ENCODE measurements at regions of chr15 and their contacts with region 1.

Region 1: GRCh38 chr15:84955089-84955848 is 26.4 kb upstream of the PDE8A start:
- DNase-seq: peak; percentile 81 to 88
- ATAC-seq: peak; percentile 90
- H3K4me3 ChIP-seq: no peak overlapping the region
- H3K27ac ChIP-seq: no peak overlapping the region
- H3K4me1 ChIP-seq: peaks cover 0 to 2% of the 10 kb centered on the region in 2 donors
- H3K27me3 ChIP-seq: peaks cover 0 to 2% of the 10 kb centered on the region in 2 donors

Region 2: GRCh38 chr15:84588053-84588874 is 367.0 kb before region 1 on chr15:
- intact Hi-C with region 1: loop called in 1 of 2 experiments (anchors 10 kb)
- DNase-seq: peak; percentile 90 to 95
- ATAC-seq: peak; percentile 99
- H3K4me3 ChIP-seq: peak overlapping the region in 1 of 2 donors; percentile 12
- H3K27ac ChIP-seq: no peak overlapping the region
- H3K4me1 ChIP-seq: no peaks in the 10 kb centered on the region
- H3K27me3 ChIP-seq: no peaks in the 10 kb centered on the region

Region 3: DNA sequence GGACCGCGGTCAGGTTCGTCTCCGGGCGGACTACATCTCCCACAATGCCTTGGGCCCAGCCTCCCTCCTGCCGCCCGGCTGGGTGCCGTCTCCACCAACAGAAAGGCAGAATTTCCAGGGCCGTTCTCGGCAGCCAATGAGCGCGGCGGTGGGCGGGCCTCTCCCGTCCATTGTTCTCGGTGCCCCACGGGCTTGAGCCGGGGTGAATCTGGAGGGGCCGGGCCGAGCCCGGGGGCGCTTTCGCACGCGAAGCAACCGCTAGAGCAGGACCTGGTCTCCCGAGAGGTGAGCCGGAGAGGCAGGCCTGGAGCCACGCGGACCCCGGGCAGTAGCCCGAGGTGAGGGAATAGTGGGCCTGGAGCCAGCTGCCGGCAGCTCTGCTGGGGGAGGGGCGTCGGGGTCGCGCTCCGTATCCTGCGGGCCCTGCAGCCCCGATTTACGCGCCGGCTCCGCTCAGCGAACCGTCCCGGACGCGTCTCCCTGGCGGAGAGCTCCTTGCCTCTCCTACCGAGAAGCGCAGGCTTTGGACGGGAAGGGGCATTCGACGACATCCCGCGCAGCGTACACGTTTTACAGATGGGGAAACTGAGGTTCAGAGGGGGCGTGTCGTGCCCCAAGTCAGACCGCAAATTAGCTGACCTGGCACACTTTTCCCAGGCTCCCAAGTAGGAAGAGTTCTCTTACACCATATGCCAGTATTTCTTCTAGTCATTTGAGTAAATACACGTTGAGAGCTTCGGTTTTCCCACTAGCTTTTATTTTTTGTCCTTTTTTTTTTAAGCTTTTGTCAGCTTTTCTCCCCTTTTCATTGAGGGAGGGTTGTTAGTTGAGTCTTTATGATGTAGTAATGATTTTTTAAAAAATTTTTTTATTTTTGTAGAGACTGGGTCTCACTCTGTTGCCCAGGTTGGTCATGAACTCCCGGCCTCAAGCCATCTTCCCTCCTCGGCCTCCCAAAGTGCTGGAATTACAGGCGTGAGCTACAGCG is 354.1 kb before region 1 on chr15 and contains the start of gene ZSCAN2:
- intact Hi-C with region 1: no loop called
- DNase-seq: peak; percentile 98
- ATAC-seq: peak; percentile 98
- H3K4me3 ChIP-seq: peak within 1 kb of the TSS; percentile 79 to 91
- H3K27ac ChIP-seq: peak within 1 kb of the TSS in 1 of 2 donors; percentile 18
- H3K4me1 ChIP-seq: no peaks in the 10 kb centered on the region
- H3K27me3 ChIP-seq: no peaks in the 10 kb centered on the region
- total RNA-seq, gene ZSCAN2: 4.1 to 6.7 TPM

Region 4: GRCh38 chr15:84859155-84859554 is 96.1 kb before region 1 on chr15:
- intact Hi-C with region 1: no loop called
- DNase-seq: no peak
- ATAC-seq: no peak
- H3K4me3 ChIP-seq: no peak overlapping the region
- H3K27ac ChIP-seq: no peak overlapping the region
- H3K4me1 ChIP-seq: peaks cover 0 to 2% of the 10 kb centered on the region in 2 donors
- H3K27me3 ChIP-seq: no peaks in the 10 kb centered on the region

Region 5: GRCh38 chr15:84915011-84915958 is 40.0 kb before region 1 on chr15:
- intact Hi-C with region 1: no loop called
- DNase-seq: peak; percentile 89 to 92
- ATAC-seq: peak; percentile 65
- H3K4me3 ChIP-seq: no peak overlapping the region
- H3K27ac ChIP-seq: peak overlapping the region; percentile 12 to 70
- H3K4me1 ChIP-seq: peaks cover 7 to 10% of the 10 kb centered on the region in 2 donors
- H3K27me3 ChIP-seq: no peaks in the 10 kb centered on the region

Region 6: DNA sequence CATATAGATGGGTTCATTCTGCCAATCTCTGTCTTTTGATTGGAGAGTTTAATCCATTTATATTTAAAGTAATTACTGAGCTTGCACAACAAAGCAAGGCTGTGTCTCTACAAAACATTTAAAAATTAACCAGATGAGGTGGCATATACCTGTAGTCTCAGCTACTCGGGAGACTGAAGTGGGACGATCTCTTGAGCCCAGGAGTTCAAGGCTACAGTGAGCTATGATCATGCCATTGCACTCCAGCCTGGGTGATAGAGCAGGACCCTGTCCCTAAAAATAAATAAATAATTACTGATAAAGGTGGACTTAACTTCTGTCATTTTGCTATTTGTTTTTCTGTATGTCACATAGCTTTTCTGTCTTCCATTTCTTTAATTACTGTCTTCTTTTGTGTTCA is 104.5 kb after region 1 on chr15:
- intact Hi-C with region 1: no loop called
- DNase-seq: no peak
- ATAC-seq: no peak
- H3K4me3 ChIP-seq: no peak overlapping the region
- H3K27ac ChIP-seq: no peak overlapping the region
- H3K4me1 ChIP-seq: no peaks in the 10 kb centered on the region
- H3K27me3 ChIP-seq: no peaks in the 10 kb centered on the region